ENCODE measurements at regions of chr1 and their contacts with region 1.

Region 1: DNA sequence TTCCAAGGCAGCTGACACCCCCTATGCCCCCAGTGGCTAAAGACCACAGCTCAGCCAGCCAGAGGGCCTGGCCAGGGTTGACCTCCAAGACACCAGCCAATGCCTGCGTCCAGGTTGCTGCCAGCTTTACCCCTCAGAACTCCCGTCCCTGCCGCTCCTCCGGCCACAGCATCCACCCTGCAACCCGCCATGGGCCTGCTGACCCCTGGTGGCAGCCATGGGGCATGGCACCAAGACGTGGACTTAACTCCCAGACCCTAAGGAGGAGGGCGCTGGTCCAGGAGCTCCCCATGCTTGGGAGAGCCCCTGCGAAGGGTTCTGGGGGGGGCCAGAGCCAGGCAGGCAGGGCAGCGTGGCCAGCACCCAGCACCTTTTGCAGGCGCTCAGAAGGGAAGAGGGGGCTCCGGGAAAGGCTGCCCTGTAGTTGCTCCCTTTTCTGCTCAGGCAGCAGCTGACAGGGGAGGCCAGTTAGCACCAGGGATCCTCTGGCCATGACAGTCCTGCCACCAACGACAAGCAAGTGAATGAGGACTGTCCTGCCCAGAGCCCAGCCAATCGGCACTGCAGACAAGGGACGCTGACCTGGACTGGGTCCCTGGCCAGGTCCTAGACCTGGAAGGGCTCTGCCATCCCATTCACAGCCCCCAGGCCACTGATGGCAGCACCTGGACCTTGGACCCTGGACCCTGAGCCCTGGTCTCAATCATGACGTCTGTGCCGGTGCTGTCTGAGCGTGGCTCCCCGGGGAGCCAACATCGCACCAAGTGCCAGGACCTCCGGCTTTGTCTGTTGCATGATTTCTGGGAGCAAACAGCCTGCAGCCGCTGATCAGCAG is 246.2 kb downstream of the NPHP4 start:
- DNase-seq: peak; percentile 73
- ATAC-seq: peak; percentile 79
- H3K4me3 Mint-ChIP-seq: no peak overlapping the region
- H3K27ac Mint-ChIP-seq: no peak overlapping the region
- H3K4me1 Mint-ChIP-seq: no peaks in the 10 kb centered on the region
- H3K27me3 Mint-ChIP-seq: peaks cover 3% of the 10 kb centered on the region

Region 2: GRCh38 chr1:5514519-5515183 is 231.3 kb before region 1 on chr1:
- CTCF ChIA-PET with region 1: interaction called, 26 read pairs
- DNase-seq: peak; percentile 73
- ATAC-seq: peak; percentile 69
- H3K4me3 Mint-ChIP-seq: no peak overlapping the region
- H3K27ac Mint-ChIP-seq: no peak overlapping the region
- H3K4me1 Mint-ChIP-seq: no peaks in the 10 kb centered on the region
- H3K27me3 Mint-ChIP-seq: peaks cover 6% of the 10 kb centered on the region

Region 3: GRCh38 chr1:5637171-5637570 is 108.8 kb before region 1 on chr1:
- CTCF ChIA-PET with region 1: interaction called, 30 read pairs
- DNase-seq: peak; percentile 60
- ATAC-seq: no peak
- H3K4me3 Mint-ChIP-seq: no peak overlapping the region
- H3K27ac Mint-ChIP-seq: no peak overlapping the region
- H3K4me1 Mint-ChIP-seq: peaks cover 2% of the 10 kb centered on the region
- H3K27me3 Mint-ChIP-seq: peaks cover 18% of the 10 kb centered on the region